Cardiac septum (tissue), 1 donor: ENCODE measurements at regions of chr7 and their contacts with region 1.

Region 1: GRCh38 chr7:106176414-106177299 is 64.5 kb upstream of the SYPL1 start:
- DNase-seq: peak; percentile 91

Region 2: DNA sequence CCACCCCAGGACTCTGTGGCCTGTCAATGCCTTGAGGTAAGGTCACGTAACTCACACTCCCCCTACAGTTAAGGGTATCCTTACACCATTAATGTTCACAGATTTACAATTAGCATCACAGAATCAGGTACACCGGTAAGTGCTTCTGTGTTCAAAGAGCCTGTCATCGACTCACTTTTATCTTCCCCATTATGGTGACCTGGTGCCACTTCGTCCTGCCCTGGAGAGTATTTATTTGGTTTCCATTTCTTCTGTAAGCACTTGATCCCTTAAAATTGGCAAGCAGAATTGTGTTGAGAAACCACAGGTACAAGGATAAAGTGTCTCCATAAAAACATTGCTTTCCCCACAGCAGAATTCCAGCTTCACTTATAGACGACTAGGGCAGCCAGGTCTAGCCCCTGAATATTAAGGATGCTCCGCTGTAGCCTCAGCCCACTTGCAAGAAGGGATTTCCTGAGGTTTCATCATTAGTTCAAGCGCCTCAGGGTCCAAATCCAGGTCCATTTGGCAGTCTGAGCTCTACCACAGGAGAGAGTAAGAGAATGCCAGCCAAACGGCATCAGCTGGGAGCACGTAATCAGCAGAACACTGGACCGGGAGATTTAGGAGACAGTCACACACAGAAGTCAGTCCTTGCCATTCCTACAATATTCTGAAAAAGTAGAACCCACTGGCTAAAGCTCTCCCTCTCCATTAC is 310.4 kb before region 1 on chr7:
- intact Hi-C with region 1: no loop called
- DNase-seq: no peak

Region 3: GRCh38 chr7:106216517-106216922 is 39.9 kb after region 1 on chr7:
- intact Hi-C with region 1: loop called (anchors 5 kb)
- DNase-seq: no peak

Region 4: DNA sequence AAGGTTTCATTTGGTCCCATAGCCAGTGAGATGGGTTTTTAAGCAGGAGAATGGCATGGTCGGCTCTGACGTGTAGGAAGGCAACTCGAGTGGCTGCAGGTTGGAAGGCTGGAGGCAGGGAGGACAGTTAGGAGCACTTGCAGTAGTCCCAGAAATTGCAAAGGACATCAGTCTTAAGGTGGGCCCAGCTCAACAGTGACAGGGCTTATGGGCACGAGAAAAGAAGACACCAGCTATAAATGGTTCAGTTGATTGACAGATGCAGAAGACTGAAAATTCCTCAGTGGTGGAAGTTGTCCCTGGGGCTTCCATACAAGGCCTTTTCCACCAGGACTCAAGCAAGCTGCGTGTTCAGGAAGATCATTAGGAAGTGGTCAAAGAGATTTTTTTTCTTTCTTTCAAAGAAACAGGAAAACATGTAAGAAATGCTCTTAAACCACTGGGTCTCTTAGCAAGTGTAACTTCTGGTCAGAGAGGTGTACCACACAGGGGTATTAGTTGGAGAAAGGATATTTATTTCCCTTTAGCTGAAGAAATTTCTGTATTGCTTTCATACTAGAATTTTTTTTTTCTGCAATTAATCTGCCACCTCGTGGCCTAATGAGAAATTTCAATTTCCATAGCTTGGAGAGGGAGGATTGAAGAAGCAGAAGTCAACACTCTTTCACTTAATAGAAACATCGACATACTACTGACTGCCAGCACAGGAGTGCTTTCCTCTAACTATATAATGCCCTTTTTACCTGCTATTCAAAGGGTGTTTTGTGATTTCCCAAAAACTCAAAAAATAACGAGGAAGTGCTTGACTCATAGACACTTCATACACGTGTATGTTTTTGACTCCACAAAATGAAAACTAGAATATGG is 285.6 kb after region 1 on chr7:
- intact Hi-C with region 1: loop called (anchors 1 kb)
- DNase-seq: no peak

Region 5: DNA sequence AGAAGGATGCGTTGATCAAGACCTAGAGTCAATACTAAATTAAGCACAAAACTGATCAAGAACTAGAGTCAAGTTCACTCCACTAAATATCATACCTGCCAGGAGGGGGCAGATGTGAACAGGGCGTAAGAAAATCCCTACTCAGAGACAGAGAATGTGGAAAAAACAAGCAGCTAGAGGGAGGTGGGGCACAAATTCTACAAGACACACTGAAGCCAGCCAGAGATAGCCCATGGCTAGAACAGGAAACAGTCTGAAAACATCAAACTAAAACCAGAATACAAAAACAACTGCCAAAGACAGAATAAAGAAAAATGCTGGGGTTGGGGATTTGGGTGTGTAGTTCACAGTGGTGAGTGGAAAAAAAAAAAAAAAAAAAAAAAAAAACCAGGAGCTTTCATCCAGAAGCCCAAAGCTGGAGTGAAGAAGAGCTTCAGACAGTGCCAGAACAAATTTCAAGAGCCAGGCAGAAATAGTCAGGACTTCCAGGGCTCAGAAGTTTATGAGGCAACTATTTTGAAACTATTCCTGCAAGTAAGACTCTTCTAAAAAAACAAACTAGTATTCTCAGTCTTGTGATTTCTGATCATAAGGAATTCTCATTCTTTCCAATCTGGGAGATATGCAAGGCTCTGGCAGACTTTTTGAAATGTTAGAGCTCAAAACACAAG is 366.0 kb after region 1 on chr7:
- intact Hi-C with region 1: loop called (anchors 2 kb)
- DNase-seq: no peak

Region 6: DNA sequence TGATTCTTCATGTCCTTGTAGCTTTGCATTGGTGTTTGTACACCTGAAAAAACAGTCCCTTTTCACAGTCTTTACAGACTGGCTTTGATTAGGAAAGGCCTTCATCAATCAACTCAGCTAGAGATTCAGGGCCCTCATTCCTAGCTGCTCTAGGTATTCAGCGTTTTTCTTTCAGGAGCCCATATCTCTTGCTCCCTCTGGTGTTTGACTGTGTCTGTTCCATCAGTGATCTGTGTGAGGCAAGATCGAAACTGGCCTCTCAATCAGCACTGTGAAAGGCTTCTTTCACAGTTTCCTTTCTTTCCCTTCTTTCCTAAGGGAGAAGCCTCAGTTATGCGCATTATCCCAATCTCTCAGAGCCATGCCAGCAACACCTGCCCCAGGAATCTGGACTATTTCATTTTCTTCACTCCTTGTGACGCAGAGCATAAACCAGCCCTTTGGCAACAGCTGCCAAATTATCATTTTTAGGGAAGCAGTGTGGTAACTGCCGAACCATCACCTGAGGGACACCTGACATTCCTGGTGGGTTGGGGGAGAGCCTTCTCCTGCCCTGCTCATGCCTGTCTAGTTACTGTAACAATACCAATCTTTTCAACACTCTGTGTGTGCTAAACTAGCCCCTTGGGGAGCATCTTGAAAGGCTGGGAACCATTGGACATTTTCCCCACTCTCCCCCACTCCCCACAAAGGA is 560.0 kb after region 1 on chr7:
- intact Hi-C with region 1: loop called (anchors 5 kb)
- DNase-seq: no peak